AG04449 (cell line): ENCODE measurements at regions of chr19 and their contacts with region 1.

Region 1: DNA sequence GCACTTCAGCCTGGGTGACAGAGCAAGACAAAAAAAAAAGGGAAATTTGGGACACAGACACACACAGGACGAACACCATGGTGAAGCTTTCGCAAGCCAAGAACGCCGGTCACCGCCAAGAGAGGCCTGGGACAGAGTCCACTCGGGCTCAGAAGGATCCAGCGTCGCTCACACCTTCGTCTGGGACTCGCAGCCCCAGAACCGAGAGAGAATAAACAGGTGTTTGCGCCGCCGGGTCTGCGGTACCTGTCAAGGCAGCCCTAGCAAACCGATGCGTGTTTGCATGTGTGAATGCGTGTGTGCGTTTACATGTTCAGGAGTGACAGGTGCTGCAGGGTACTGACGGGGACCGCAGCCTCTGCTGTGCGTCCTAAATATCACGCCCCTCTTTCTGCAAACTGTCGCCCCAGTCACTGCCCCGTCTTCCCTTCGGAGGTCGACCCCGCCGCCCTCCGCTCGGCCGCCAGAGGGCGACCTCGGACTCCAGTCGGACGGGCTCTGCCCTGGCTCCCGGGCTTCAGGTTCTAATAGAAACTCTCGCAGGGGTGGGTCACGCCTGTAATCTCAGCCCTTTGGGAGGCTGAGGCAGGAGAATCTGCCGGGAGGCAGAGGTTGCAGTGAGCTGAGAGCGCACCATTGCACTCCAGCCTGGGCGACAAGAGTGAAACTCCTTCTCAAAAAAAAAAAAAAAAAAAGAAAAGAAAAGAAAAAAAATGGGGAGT is 11.8 kb upstream of the CSNK1G2 start:
- DNase-seq: no peak
- H3K4me3 ChIP-seq: peak overlapping the region; percentile 49
- CTCF ChIP-seq: peak; percentile 96

Region 2: GRCh38 chr19:1913781-1914577 is 15.2 kb before region 1 on chr19:
- CTCF ChIA-PET with region 1: interaction called, 38 read pairs
- POLR2A ChIA-PET with region 1: no interaction called
- DNase-seq: no peak
- H3K4me3 ChIP-seq: no peak overlapping the region
- CTCF ChIP-seq: no peak

Region 3: GRCh38 chr19:1942078-1942933 is 13.1 kb after region 1 on chr19:
- CTCF ChIA-PET with region 1: interaction called, 10 read pairs
- POLR2A ChIA-PET with region 1: no interaction called
- DNase-seq: no peak
- H3K4me3 ChIP-seq: peak overlapping the region; percentile 84
- CTCF ChIP-seq: no peak

Region 4: DNA sequence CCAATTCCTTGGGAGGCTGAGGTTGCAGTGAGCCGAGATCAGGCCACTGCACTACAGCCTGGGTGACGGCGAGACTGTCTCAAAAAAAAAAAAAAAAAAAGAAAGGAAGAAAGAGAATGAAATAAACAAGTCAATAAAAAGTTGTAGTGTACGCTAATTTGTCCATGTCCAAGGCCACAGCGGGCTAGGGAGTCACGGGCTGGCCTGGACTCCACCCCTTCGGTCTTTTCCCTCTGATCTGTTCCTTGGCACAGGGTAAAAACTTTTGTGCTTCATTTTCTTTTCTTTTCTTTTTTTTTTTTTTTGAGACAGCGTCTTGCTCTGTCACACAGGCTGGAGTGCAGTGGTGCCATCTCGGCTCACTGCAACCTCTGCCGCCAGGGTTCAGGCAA is 141.2 kb after region 1 on chr19:
- CTCF ChIA-PET with region 1: interaction called, 12 read pairs
- POLR2A ChIA-PET with region 1: no interaction called
- DNase-seq: no peak
- H3K4me3 ChIP-seq: no peak overlapping the region
- CTCF ChIP-seq: no peak

Region 5: DNA sequence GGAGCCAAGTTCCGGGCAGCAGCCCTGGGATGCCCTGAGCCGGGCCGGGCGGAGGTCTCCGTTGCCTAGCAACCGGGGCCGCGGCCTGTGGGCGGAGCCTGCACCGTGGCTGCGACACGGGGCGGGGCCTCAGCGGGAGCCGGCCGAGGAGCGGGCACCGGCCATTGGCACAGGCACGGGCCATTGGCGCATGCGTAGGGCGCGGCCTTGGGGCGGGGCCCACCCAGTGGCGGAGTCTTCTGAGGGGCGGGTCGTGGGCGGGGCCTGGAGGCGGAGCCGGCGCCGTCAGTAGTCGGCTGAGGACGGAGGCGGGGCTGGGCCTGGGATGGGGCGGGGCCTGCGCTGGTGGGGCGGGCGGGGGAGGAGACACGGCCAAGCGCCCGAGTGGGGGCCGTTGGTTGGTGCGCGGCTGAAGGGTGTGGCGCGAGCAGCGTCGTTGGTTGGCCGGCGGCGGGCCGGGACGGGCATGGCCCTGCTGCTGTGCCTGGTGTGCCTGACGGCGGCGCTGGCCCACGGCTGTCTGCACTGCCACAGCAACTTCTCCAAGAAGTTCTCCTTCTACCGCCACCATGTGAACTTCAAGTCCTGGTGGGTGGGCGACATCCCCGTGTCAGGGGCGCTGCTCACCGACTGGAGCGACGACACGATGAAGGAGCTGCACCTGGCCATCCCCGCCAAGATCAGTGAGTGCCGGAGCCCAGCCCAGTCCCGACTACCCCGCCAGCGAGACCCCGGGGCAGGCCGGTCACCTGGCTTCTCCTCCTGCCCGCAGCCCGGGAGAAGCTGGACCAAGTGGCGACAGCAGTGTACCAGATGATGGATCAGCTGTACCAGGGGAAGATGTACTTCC is 167.5 kb after region 1 on chr19 and contains the start of gene IZUMO4:
- CTCF ChIA-PET with region 1: interaction called, 14 read pairs
- POLR2A ChIA-PET with region 1: no interaction called
- DNase-seq: peak; percentile 64
- H3K4me3 ChIP-seq: peak within 1 kb of the TSS; percentile 75
- CTCF ChIP-seq: peak; percentile 67